ENCODE measurements at regions of chr14 and their contacts with region 1.

Region 1: DNA sequence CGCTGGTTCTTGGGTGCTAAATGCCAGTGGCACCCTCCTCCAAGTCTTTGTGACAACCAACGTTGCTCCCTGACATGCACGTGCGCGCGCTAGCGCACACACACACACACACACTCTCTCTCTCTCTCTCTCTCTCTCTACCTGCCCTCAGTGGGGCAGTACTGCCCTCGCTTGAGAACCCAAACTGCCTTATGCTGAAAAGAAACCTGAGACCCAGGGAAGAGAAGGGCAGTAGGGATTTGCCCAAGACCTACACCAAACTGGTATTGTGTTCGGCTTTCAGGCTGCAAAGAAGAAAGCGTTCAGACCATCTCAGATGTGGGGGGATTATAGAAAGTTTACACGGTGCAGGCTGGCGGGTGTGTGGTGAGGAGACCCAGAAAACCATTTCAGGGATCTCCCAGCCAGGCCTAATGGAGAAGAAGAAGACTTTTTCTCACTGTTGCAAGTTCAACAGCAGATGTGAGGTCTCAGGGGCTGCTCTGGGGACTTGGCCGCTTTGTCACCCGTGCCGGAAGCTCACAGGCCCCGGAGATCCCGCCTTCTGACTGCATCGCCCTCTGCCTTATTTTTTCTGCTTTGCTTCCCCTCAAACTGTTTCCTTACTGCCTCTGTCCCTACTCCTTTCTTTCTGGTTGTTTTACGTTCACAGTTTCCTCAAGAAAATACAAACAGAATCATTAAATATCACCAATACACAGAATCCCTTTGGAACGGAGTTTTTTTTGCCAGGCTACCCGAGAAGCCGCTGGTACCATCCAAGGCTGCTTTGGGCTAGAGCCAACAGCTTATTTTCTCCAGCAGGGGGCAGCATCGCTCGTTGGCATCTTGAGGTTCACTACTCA is 82.4 kb downstream of the PPM1A start:
- DNase-seq: peak; percentile 73
- H3K4me3 ChIP-seq: no peak overlapping the region; a peak in 1 of 4 replicates
- H3K27ac ChIP-seq: no peak overlapping the region
- H3K4me1 ChIP-seq: no peaks in the 10 kb centered on the region; a peak in 1 of 4 replicates
- H3K27me3 ChIP-seq: no peaks in the 10 kb centered on the region; the same call in 1 of the 2 replicates
- CTCF ChIP-seq: peak; percentile 78
- EP300 ChIP-seq: no peak
- RAD21 ChIP-seq: peak; percentile 71

Region 2: GRCh38 chr14:60175246-60175902 is 156.0 kb before region 1 on chr14:
- CTCF ChIA-PET with region 1: no interaction called
- POLR2A ChIA-PET with region 1: no interaction called
- DNase-seq: no peak
- H3K4me3 ChIP-seq: no peak overlapping the region
- H3K27ac ChIP-seq: no peak overlapping the region
- H3K4me1 ChIP-seq: 0 out of 4 replicates have a peak, but pooled peaks cover 0 to 3% of the 10 kb centered on the region in 2 experiments
- H3K27me3 ChIP-seq: no peaks in the 10 kb centered on the region
- CTCF ChIP-seq: no peak
- EP300 ChIP-seq: no peak
- RAD21 ChIP-seq: no peak

Region 3: GRCh38 chr14:60344751-60345150 is 13.3 kb after region 1 on chr14:
- CTCF ChIA-PET with region 1: interaction called, 25 read pairs
- POLR2A ChIA-PET with region 1: no interaction called
- DNase-seq: no peak
- H3K4me3 ChIP-seq: no peak overlapping the region
- H3K27ac ChIP-seq: no peak overlapping the region
- H3K4me1 ChIP-seq: peaks cover 0 to 3% of the 10 kb centered on the region in 2 experiments; a peak in 1 of 4 replicates
- H3K27me3 ChIP-seq: no peaks in the 10 kb centered on the region
- CTCF ChIP-seq: no peak
- EP300 ChIP-seq: no peak
- RAD21 ChIP-seq: no peak

Region 4: GRCh38 chr14:60396718-60397343 is 65.4 kb after region 1 on chr14:
- CTCF ChIA-PET with region 1: no interaction called
- POLR2A ChIA-PET with region 1: no interaction called
- DNase-seq: no peak
- H3K4me3 ChIP-seq: no peak overlapping the region
- H3K27ac ChIP-seq: no peak overlapping the region
- H3K4me1 ChIP-seq: no peaks in the 10 kb centered on the region
- H3K27me3 ChIP-seq: no peaks in the 10 kb centered on the region
- CTCF ChIP-seq: no peak
- EP300 ChIP-seq: no peak
- RAD21 ChIP-seq: no peak

Region 5: DNA sequence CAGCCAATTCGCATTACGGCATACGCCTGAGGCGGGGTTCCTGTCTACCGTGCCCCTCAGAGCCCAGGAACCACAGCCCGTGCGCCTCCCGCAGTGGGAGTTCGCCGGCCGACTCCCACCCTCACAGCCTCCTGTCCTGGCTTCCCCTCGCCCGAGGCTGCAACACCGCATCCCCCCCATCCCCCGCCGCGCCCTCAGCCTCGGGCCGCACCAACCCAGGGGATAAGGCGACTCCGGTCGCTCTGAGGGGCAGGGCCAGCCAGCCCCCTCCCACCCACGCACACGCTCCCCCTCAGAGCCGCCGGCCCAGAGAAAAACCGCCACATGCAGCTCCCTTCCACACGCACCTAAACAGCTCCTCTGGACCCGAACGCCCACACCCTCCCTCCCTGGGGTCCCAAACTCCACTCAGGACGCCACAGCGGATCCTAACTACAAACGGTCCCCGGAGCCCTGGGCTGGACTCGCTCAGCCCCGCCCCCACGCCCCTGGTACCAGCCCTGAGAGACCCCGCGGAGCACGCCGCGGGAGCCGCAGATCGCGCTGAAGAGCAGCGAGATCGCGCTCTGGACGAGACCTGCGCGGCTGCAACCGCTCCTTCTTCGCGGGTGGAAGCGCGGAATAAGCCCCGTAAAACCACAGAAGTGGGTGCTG is 154.3 kb after region 1 on chr14 and contains the start of gene C14orf39:
- CTCF ChIA-PET with region 1: interaction called, 13 read pairs
- POLR2A ChIA-PET with region 1: interaction called, 3 read pairs
- DNase-seq: peak; percentile 84
- H3K4me3 ChIP-seq: peak within 1 kb of the TSS; percentile 64 to 68
- H3K27ac ChIP-seq: peak within 1 kb of the TSS in 1 of 2 experiments; percentile 60; a peak in 1 of 4 replicates
- H3K4me1 ChIP-seq: no peaks in the 10 kb centered on the region; a peak in 1 of 4 replicates
- H3K27me3 ChIP-seq: peaks cover 8% of the 10 kb centered on the region; the same call in 1 of the 2 replicates
- CTCF ChIP-seq: no peak
- EP300 ChIP-seq: no peak
- RAD21 ChIP-seq: no peak
- polyA plus RNA-seq, gene C14orf39: 0.13 and 0.18 TPM in 2 replicates